Calu3 (cell line): ENCODE measurements at regions of chr5 and their contacts with region 1.

Region 1: GRCh38 chr5:145531038-145531734 is 304.0 kb downstream of the PRELID2 start:
- DNase-seq: peak; percentile 89
- H3K4me3 Mint-ChIP-seq: peak overlapping the region; percentile 36
- H3K27ac Mint-ChIP-seq: peak overlapping the region; percentile 22
- H3K4me1 Mint-ChIP-seq: peaks cover 55% of the 10 kb centered on the region
- H3K27me3 Mint-ChIP-seq: no peaks in the 10 kb centered on the region
- CTCF ChIP-seq: no peak

Region 2: GRCh38 chr5:144832416-144832815 is 698.8 kb before region 1 on chr5:
- CTCF ChIA-PET with region 1: no interaction called
- intact Hi-C with region 1: no loop called
- DNase-seq: no peak
- H3K4me3 Mint-ChIP-seq: no peak overlapping the region
- H3K27ac Mint-ChIP-seq: no peak overlapping the region
- H3K4me1 Mint-ChIP-seq: no peaks in the 10 kb centered on the region
- H3K27me3 Mint-ChIP-seq: no peaks in the 10 kb centered on the region
- CTCF ChIP-seq: no peak

Region 3: GRCh38 chr5:145484158-145484557 is 47.0 kb before region 1 on chr5:
- CTCF ChIA-PET with region 1: no interaction called
- intact Hi-C with region 1: loop called (anchors 5 kb)
- DNase-seq: peak; percentile 18
- H3K4me3 Mint-ChIP-seq: no peak overlapping the region
- H3K27ac Mint-ChIP-seq: peak overlapping the region; percentile 38
- H3K4me1 Mint-ChIP-seq: peaks cover 50% of the 10 kb centered on the region
- H3K27me3 Mint-ChIP-seq: no peaks in the 10 kb centered on the region
- CTCF ChIP-seq: no peak

Region 4: DNA sequence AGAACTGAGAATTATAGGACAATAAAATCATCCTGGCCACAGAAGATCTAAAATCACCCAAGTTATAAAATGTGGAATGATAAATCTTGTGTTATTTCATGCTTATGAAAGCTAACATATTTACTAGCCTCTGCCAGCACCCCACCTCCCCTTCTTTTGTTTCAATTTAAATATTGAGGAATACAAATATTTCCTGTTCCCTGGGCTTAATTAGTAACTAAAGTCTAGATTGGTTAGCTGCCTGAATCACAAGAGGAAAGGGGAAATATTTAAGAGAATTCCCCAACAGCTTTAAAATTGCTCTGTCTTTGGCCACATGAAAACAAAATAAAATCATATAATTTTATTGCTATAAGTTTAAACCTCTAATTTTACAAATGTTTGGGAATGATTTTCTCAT is 16.9 kb after region 1 on chr5:
- CTCF ChIA-PET with region 1: interaction called, 5 read pairs
- intact Hi-C with region 1: loop called (anchors 1 kb)
- DNase-seq: no peak
- H3K4me3 Mint-ChIP-seq: no peak overlapping the region
- H3K27ac Mint-ChIP-seq: peak overlapping the region; percentile 65
- H3K4me1 Mint-ChIP-seq: peaks cover 63% of the 10 kb centered on the region
- H3K27me3 Mint-ChIP-seq: no peaks in the 10 kb centered on the region
- CTCF ChIP-seq: no peak

Region 5: DNA sequence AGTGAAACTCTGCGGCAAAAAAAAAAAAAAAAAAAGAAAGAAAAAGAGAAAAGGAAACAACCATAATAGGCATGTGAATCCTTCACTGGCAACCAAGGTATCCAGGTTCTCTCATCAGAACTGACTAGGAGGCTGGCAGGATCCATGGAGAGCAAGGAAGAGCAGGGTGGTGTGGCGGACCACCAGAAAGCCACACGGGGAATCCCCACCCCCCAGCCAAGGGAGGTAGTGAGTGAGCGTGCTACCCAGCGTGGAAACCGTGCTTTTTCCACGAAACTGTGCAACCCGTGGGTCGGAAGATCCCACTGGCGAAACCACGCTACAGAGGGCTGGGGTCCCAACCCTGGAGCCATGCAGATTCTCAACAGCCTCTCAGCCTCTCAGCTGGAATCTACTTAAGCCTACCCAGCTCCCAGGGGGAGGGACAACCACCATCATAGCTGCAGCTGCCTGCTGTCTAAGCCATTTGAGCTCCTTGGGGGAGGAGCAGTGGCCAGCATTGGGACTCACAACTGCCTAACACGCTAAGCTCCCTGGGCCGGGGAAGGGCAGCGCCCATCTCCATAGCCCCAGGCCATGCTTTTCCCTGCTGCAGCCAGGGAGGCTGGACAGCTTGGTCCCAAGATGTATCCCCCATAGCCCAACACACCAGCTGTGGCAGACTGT is 212.3 kb after region 1 on chr5:
- CTCF ChIA-PET with region 1: no interaction called
- intact Hi-C with region 1: no loop called
- DNase-seq: no peak
- H3K4me3 Mint-ChIP-seq: no peak overlapping the region
- H3K27ac Mint-ChIP-seq: no peak overlapping the region
- H3K4me1 Mint-ChIP-seq: no peaks in the 10 kb centered on the region
- H3K27me3 Mint-ChIP-seq: no peaks in the 10 kb centered on the region
- CTCF ChIP-seq: no peak

Region 6: DNA sequence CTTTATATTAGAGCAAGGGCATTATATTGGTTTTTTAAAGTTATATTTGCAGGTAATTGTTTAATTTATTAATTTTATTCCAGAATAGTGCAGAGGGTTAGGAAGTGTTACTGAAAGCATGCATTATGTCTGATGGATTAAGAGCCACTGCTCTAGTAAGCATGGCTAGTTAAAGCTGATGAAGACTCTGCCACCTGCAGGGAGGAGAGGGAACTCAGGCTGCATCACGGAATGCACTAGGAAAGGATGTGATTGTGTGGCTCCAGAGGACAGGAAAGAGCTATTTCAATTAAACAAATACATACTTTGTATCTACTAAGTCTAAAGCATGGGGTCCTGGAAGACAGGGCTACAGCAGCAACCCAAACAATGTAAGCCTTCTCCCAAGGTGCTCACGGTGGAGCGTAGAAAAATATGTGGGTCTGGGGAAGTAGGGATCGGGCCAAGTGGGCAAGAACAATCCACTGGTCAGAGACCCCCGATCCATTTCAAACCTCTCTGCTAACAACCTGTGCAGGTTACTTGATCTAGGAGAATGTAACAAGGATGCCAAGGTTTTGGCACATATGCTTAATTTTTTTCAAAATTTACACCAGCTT is 356.9 kb after region 1 on chr5:
- CTCF ChIA-PET with region 1: no interaction called
- intact Hi-C with region 1: no loop called
- DNase-seq: peak; percentile 72
- H3K4me3 Mint-ChIP-seq: no peak overlapping the region
- H3K27ac Mint-ChIP-seq: no peak overlapping the region
- H3K4me1 Mint-ChIP-seq: no peaks in the 10 kb centered on the region
- H3K27me3 Mint-ChIP-seq: no peaks in the 10 kb centered on the region
- CTCF ChIP-seq: peak; percentile 74

Region 7: GRCh38 chr5:147169399-147169798 is 1638.2 kb after region 1 on chr5:
- CTCF ChIA-PET with region 1: no interaction called
- intact Hi-C with region 1: loop called (anchors 5 kb)
- DNase-seq: peak; percentile 47
- H3K4me3 Mint-ChIP-seq: no peak overlapping the region
- H3K27ac Mint-ChIP-seq: peak overlapping the region; percentile 94
- H3K4me1 Mint-ChIP-seq: peaks cover 44% of the 10 kb centered on the region
- H3K27me3 Mint-ChIP-seq: no peaks in the 10 kb centered on the region
- CTCF ChIP-seq: no peak